ENCODE measurements at regions of chr18 and their contacts with region 1.

Region 1: DNA sequence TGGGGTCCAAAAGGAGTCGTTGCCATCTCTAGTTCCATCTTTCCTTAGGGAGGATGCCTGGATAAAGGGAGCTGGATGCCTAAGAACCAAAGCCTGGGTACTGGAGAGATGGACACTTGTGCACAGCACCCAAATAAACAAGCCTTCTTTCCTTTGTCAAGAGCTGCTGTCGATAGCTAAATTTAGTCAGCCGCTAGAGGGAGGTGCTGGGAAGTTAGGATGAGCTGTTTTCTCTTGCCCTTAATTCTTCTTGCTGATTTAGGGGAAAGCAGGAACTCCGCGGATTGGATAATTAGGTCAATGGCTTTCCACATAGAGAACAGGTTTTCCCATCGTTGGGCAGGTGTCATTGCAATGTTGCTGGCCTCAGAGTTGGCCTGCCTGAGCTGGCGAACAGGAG is 30.9 kb upstream of the SERPINB12 start:
- DNase-seq: peak; percentile 13 to 68
- ATAC-seq: peak; percentile 82 to 87
- H3K4me3 ChIP-seq: no peak overlapping the region
- H3K27ac ChIP-seq: no peak overlapping the region
- H3K4me1 ChIP-seq: no peaks in the 10 kb centered on the region
- CTCF ChIP-seq: peak; percentile 37
- EP300 ChIP-seq: no peak
- POLR2A ChIP-seq: no peak
- RAD21 ChIP-seq: peak in 1 of 2 experiments; percentile 38; a peak in 2 of 5 replicates

Region 2: GRCh38 chr18:63487676-63488075 is 23.6 kb before region 1 on chr18:
- CTCF ChIA-PET with region 1: interaction called, 19 read pairs
- POLR2A ChIA-PET with region 1: interaction called, 3 read pairs
- DNase-seq: no peak
- ATAC-seq: no peak
- H3K4me3 ChIP-seq: no peak overlapping the region
- H3K27ac ChIP-seq: no peak overlapping the region
- H3K4me1 ChIP-seq: no peaks in the 10 kb centered on the region
- CTCF ChIP-seq: no peak
- EP300 ChIP-seq: no peak
- POLR2A ChIP-seq: no peak
- RAD21 ChIP-seq: no peak

Region 3: GRCh38 chr18:63578357-63578958 is 67.2 kb after region 1 on chr18:
- CTCF ChIA-PET with region 1: interaction called, 13 read pairs
- POLR2A ChIA-PET with region 1: no interaction called
- DNase-seq: peak in 1 of 2 experiments; percentile 37
- ATAC-seq: peak in 1 of 2 experiments; percentile 57; a peak in 3 of 6 replicates
- H3K4me3 ChIP-seq: no peak overlapping the region
- H3K27ac ChIP-seq: no peak overlapping the region
- H3K4me1 ChIP-seq: no peaks in the 10 kb centered on the region
- CTCF ChIP-seq: peak; percentile 50
- EP300 ChIP-seq: no peak
- POLR2A ChIP-seq: no peak
- RAD21 ChIP-seq: peak; percentile 42 to 68; a peak in 4 of 5 replicates